Activated CD4-positive, alpha-beta T cell treated with anti-CD3 and anti-CD28 coated beads for 36 hours (primary cell): ENCODE measurements at regions of chr15 and their contacts with region 1.

Region 1: DNA sequence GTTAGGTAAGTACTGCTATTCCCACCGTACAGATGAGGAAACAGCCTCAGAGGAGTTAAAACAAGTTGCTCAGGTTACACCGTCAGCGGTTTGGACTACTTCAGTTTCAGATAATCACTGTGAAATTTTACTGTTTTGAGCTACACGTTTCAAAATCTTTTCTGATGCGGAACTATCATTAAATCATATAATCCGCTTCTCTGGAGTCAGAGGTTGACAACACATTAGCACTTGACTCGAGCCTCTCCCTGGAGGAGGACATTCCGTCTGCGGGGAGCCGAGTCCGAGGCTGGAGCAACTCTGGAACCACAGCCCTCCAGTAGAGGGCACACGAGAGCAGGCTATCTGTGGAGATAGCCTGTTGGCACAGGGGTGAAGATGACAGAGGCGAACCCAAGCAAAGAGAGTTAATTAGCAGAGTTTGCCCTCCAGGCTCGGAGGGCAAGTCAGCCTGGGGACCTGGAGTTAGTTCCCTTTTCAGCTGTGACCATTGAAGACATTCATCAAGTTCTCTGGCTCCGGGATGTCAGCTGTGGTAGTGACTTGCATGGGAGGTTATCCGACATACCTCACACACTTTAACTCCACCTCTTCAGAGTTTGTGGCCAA is 131.2 kb downstream of the IGF1R start:
- DNase-seq: peak; percentile 87
- ATAC-seq: peak; percentile 90
- H3K4me3 Mint-ChIP-seq: no peak overlapping the region
- H3K27ac Mint-ChIP-seq: no peak overlapping the region
- H3K4me1 Mint-ChIP-seq: peaks cover 43% of the 10 kb centered on the region
- H3K27me3 Mint-ChIP-seq: no peaks in the 10 kb centered on the region

Region 2: DNA sequence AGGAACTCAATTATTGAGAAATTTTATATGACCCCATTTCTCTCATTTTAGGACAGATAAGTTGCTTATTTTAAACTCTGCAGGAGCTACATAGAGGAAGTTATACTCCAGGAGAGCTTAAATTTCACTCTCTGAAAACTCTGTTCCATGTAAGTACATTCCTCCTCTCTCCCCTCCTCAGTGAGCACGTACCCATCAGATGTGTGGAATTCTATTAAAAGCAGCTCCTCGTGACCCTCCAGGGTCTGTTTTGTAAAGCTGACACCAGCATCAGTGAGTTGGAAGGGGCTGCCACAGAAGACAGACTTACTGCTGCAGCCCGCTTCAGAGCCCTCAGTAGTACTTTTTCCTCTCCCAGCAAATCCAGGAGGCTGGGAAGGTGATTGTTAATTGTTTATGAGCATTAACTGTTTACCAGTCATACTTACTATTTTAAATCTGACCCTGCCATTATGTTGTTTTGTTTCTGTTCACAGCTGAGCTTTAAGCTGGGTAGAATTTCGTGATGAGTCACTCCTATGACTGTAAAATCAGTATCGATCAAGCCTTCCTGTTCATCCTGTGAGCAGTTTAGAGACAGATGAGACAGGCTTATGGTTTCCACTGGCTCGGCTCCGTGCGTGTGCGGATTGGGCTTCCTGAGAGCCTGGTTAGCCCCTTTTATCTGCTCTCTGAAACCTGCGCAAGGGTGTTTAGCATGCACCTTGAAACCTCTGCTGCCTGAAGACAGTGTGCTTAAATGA is 110.8 kb before region 1 on chr15:
- CTCF ChIA-PET with region 1: interaction called, 3 read pairs
- POLR2A ChIA-PET with region 1: no interaction called
- intact Hi-C with region 1: loop called in 1 of 2 experiments (anchors 5 kb)
- DNase-seq: peak; percentile 81
- ATAC-seq: peak; percentile 99
- H3K4me3 Mint-ChIP-seq: peak overlapping the region; percentile 24
- H3K27ac Mint-ChIP-seq: peak overlapping the region; percentile 80
- H3K4me1 Mint-ChIP-seq: peaks cover 79% of the 10 kb centered on the region
- H3K27me3 Mint-ChIP-seq: no peaks in the 10 kb centered on the region

Region 3: DNA sequence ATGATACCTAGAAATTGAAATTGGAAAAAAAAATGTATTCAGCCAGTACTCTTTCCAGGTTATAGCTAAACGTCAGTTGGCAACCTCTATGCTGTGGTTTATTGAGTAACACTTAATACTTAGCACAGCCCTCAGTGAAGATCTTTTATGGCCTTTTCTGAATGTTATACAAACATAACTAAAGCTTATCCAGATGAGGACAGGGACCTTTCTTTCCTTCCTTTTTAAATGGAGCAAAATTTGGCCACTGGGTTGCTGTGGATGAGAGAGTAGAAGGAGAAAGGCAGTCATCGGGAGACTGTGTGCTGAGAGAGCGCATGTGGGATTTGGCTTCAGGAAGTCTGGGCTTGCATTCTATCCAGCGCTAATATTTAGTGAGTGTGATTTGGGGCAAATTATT is 95.1 kb before region 1 on chr15:
- CTCF ChIA-PET with region 1: no interaction called
- POLR2A ChIA-PET with region 1: no interaction called
- intact Hi-C with region 1: no loop called
- DNase-seq: no peak
- ATAC-seq: no peak
- H3K4me3 Mint-ChIP-seq: no peak overlapping the region
- H3K27ac Mint-ChIP-seq: no peak overlapping the region
- H3K4me1 Mint-ChIP-seq: peaks cover 67% of the 10 kb centered on the region
- H3K27me3 Mint-ChIP-seq: no peaks in the 10 kb centered on the region

Region 4: GRCh38 chr15:98881526-98882520 is 102.3 kb after region 1 on chr15:
- CTCF ChIA-PET with region 1: interaction called, 37 read pairs
- POLR2A ChIA-PET with region 1: no interaction called
- intact Hi-C with region 1: loop called (anchors 1 kb)
- DNase-seq: peak; percentile 16
- ATAC-seq: peak; percentile 72
- H3K4me3 Mint-ChIP-seq: no peak overlapping the region
- H3K27ac Mint-ChIP-seq: no peak overlapping the region
- H3K4me1 Mint-ChIP-seq: peaks cover 9% of the 10 kb centered on the region
- H3K27me3 Mint-ChIP-seq: no peaks in the 10 kb centered on the region

Region 5: DNA sequence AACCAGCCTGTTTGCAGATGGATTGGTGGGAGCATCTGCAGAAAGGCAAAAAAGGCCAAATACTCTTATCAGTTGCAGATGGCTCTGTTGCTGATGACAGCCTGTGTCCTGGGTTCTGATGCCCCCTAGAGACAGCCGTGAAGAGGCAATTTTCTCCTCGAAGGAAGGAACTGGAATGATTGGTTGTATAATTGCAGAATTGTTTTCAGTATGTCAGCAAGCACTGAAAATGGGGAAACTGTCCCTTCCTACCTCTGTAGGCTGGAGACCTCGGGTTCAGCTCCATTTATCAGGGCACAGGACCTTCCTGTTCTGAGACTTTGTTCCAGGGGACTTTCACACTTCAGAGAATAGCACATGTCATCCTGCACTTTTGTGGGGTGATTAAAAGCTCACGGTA is 125.0 kb after region 1 on chr15:
- CTCF ChIA-PET with region 1: interaction called, 4 read pairs
- POLR2A ChIA-PET with region 1: no interaction called
- intact Hi-C with region 1: loop called in 1 of 2 experiments (anchors 1 kb)
- DNase-seq: peak; percentile 27
- ATAC-seq: peak; percentile 49
- H3K4me3 Mint-ChIP-seq: no peak overlapping the region
- H3K27ac Mint-ChIP-seq: no peak overlapping the region
- H3K4me1 Mint-ChIP-seq: peaks cover 18% of the 10 kb centered on the region
- H3K27me3 Mint-ChIP-seq: no peaks in the 10 kb centered on the region

Region 6: GRCh38 chr15:99076552-99077308 is 297.2 kb after region 1 on chr15:
- CTCF ChIA-PET with region 1: interaction called, 11 read pairs
- POLR2A ChIA-PET with region 1: no interaction called
- intact Hi-C with region 1: loop called (anchors 1 to 5 kb)
- DNase-seq: peak; percentile 58
- ATAC-seq: peak; percentile 87
- H3K4me3 Mint-ChIP-seq: peak overlapping the region; percentile 65
- H3K27ac Mint-ChIP-seq: peak overlapping the region; percentile 89
- H3K4me1 Mint-ChIP-seq: peaks cover 6% of the 10 kb centered on the region
- H3K27me3 Mint-ChIP-seq: peaks cover 10% of the 10 kb centered on the region